ENCODE measurements at regions of chr1 and their contacts with region 1.

Region 1: DNA sequence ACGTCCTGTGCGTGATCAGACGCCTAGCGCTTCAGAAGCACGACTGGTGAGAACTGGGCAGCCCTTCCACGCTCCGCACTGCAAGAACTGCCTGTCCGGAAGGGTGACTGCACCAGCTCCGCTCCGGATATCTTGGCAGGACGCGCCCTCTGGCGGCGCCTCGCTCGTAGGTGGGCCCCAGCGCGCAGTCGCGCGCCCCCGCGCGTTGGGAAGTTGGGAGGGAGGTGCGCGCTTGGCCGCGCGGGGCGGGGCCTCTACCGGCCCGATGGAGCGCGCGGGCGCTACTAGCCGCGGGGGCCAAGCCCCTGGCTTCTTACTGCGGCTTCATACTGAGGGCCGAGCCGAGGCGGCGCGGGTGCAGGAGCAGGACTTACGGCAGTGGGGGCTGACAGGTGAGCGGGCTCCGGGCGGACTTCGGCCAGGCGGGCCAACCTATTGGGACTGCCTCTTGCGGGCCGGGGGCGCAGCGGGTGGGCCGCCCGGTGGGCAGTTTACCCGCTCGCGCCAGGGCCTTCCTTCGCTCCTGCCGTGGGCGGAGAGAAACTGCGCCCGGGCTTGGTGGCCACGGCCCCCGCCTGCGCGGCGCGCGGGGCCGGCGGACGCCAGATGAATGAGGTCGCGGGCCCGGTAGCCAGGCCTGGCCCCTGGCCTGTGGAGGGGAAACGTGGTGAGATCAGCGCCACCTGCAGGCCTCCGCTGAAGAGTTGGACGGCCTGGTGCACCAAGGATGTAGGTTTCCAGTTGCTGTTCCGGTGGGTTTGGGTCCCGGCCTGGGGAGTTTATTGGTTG is at the start of gene CHD1L:
- DNase-seq: peak; percentile 95 to 96 (median 95)
- H3K4me3 ChIP-seq: peak within 1 kb of the TSS; percentile 76 to 97 (median 93)
- H3K4me3 Mint-ChIP-seq: peak within 1 kb of the TSS; percentile 91 to 97
- H3K27ac ChIP-seq: peak within 1 kb of the TSS; percentile 11 to 82
- H3K27ac Mint-ChIP-seq: peak within 1 kb of the TSS; percentile 59 to 79 (median 70)
- H3K4me1 ChIP-seq: peaks cover 29 to 44% of the 10 kb centered on the region in 2 donors
- H3K4me1 Mint-ChIP-seq: peaks cover 39% of the 10 kb centered on the region
- H3K27me3 ChIP-seq: no peaks in the 10 kb centered on the region
- H3K27me3 Mint-ChIP-seq: peaks cover 0 to 2% (median 0%) of the 10 kb centered on the region in 3 donors
- CTCF ChIP-seq: peak; percentile 80
- polyA plus RNA-seq, gene CHD1L: 13.1 to 23.0 (median 15.2) TPM

Region 2: GRCh38 chr1:147084273-147085096 is 158.1 kb before region 1 on chr1:
- intact Hi-C with region 1: loop called in 1 of 2 experiments (anchors 10 kb)
- DNase-seq: peak; percentile 30 to 65 (median 65)
- H3K4me3 ChIP-seq: peak overlapping the region; percentile 38 to 76 (median 48)
- H3K4me3 Mint-ChIP-seq: peak overlapping the region; percentile 87 to 100
- H3K27ac ChIP-seq: peak overlapping the region in 1 of 2 donors; percentile 50
- H3K27ac Mint-ChIP-seq: peak overlapping the region; percentile 74 to 97 (median 88)
- H3K4me1 ChIP-seq: peaks cover 19 to 29% of the 10 kb centered on the region in 2 donors
- H3K4me1 Mint-ChIP-seq: peaks cover 32% of the 10 kb centered on the region
- H3K27me3 ChIP-seq: peaks cover 40 to 74% of the 10 kb centered on the region in 2 donors
- H3K27me3 Mint-ChIP-seq: peaks cover 63 to 75% (median 70%) of the 10 kb centered on the region in 3 donors
- CTCF ChIP-seq: no peak

Region 3: GRCh38 chr1:147172168-147172992 is 70.3 kb before region 1 on chr1 and contains the start of gene PRKAB2:
- intact Hi-C with region 1: loop called (anchors 2 kb)
- DNase-seq: peak; percentile 88 to 93 (median 91)
- H3K4me3 ChIP-seq: peak within 1 kb of the TSS; percentile 92 to 98 (median 93)
- H3K4me3 Mint-ChIP-seq: peak within 1 kb of the TSS; percentile 99 to 100
- H3K27ac ChIP-seq: peak within 1 kb of the TSS; percentile 94 to 96
- H3K27ac Mint-ChIP-seq: peak within 1 kb of the TSS; percentile 96 to 99 (median 98)
- H3K4me1 ChIP-seq: peaks cover 22 to 28% of the 10 kb centered on the region in 2 donors
- H3K4me1 Mint-ChIP-seq: peaks cover 32% of the 10 kb centered on the region
- H3K27me3 ChIP-seq: no peaks in the 10 kb centered on the region
- H3K27me3 Mint-ChIP-seq: no peaks in the 10 kb centered on the region
- CTCF ChIP-seq: peak; percentile 91
- polyA plus RNA-seq, gene PRKAB2: 1.1 to 14.0 (median 1.7) TPM

Region 4: GRCh38 chr1:147486856-147487255 is 244.2 kb after region 1 on chr1:
- intact Hi-C with region 1: no loop called
- DNase-seq: no peak
- H3K4me3 ChIP-seq: no peak overlapping the region
- H3K4me3 Mint-ChIP-seq: no peak overlapping the region
- H3K27ac ChIP-seq: no peak overlapping the region
- H3K27ac Mint-ChIP-seq: no peak overlapping the region
- H3K4me1 ChIP-seq: no peaks in the 10 kb centered on the region
- H3K4me1 Mint-ChIP-seq: no peaks in the 10 kb centered on the region
- H3K27me3 ChIP-seq: no peaks in the 10 kb centered on the region
- H3K27me3 Mint-ChIP-seq: peaks cover 2 to 5% (median 2%) of the 10 kb centered on the region in 3 donors
- CTCF ChIP-seq: no peak

Region 5: GRCh38 chr1:147735423-147735822 is 492.8 kb after region 1 on chr1:
- intact Hi-C with region 1: no loop called
- DNase-seq: no peak
- H3K4me3 ChIP-seq: no peak overlapping the region
- H3K4me3 Mint-ChIP-seq: no peak overlapping the region
- H3K27ac ChIP-seq: no peak overlapping the region
- H3K27ac Mint-ChIP-seq: no peak overlapping the region
- H3K4me1 ChIP-seq: no peaks in the 10 kb centered on the region
- H3K4me1 Mint-ChIP-seq: no peaks in the 10 kb centered on the region
- H3K27me3 ChIP-seq: no peaks in the 10 kb centered on the region
- H3K27me3 Mint-ChIP-seq: peaks cover 6 to 12% (median 7%) of the 10 kb centered on the region in 3 donors
- CTCF ChIP-seq: no peak

Region 6: GRCh38 chr1:147748676-147749350 is 506.2 kb after region 1 on chr1:
- intact Hi-C with region 1: no loop called
- DNase-seq: no peak
- H3K4me3 ChIP-seq: no peak overlapping the region
- H3K4me3 Mint-ChIP-seq: no peak overlapping the region
- H3K27ac ChIP-seq: no peak overlapping the region
- H3K27ac Mint-ChIP-seq: no peak overlapping the region
- H3K4me1 ChIP-seq: no peaks in the 10 kb centered on the region
- H3K4me1 Mint-ChIP-seq: no peaks in the 10 kb centered on the region
- H3K27me3 ChIP-seq: no peaks in the 10 kb centered on the region
- H3K27me3 Mint-ChIP-seq: peaks cover 2 to 3% (median 2%) of the 10 kb centered on the region in 3 donors
- CTCF ChIP-seq: no peak

Measured in CD14-positive monocyte (primary cell).